ENCODE measurements at regions of chr17 and their contacts with region 1.

Region 1: GRCh38 chr17:50853015-50853615 is 13.0 kb downstream of the TOB1 start:
- DNase-seq: no peak
- ATAC-seq: no peak
- H3K4me3 ChIP-seq: no peak overlapping the region
- H3K27ac ChIP-seq: no peak overlapping the region; the same call in 1 of the 2 replicates
- H3K4me1 ChIP-seq: peaks cover 11% of the 10 kb centered on the region; the same call in 1 of the 2 replicates
- H3K27me3 ChIP-seq: no peaks in the 10 kb centered on the region
- CTCF ChIP-seq: no peak

Region 2: GRCh38 chr17:50949989-50950881 is 97.1 kb after region 1 on chr17:
- CTCF ChIA-PET with region 1: interaction called, 33 read pairs
- POLR2A ChIA-PET with region 1: interaction called, 4 read pairs
- in situ Hi-C with region 1: no loop called
- intact Hi-C with region 1: loop called (anchors 1 kb)
- DNase-seq: peak; percentile 67
- ATAC-seq: peak; percentile 86
- H3K4me3 ChIP-seq: peak overlapping the region in 1 of 2 experiments; percentile 15; a peak in 1 of 4 replicates
- H3K27ac ChIP-seq: peak overlapping the region; percentile 87
- H3K4me1 ChIP-seq: peaks cover 63% of the 10 kb centered on the region
- H3K27me3 ChIP-seq: no peaks in the 10 kb centered on the region
- CTCF ChIP-seq: peak; percentile 96

Region 3: DNA sequence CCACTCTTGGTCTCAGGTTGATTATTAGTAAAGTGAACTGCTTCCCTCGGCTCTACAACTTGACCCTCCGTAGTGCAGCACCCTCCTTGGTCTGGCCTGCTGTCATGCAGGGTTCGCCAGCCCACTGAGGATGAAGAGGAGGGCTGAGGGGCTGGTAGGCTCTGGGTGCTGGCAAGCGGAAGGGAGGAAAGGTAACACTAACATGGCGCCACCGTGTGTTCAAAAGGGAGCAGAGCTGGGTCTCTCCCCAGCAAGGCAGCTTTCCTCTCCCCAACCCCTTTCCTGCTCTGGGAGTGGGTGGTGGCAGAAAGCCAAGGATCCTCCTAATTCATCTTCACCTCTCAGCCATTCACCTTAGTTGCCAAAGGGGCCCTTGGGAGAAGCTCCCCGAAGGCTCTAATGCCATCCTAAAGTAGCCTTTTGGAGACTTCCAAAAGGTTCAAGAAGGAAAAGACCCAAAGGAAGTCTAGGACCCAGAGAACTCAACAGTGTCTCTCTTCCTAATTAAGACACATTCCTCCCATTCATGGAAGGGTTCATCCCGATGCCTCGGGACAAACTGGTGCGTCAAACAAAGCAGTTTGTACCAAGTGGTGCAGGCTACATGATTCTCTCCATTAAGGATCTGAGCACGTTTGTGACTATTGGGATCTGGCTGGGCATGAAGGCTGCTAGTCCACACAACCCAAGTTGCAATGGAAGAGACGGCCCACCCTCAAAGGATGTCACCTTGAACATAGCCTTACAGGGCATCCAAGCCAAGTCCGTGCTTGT is 103.8 kb after region 1 on chr17:
- CTCF ChIA-PET with region 1: interaction called, 11 read pairs
- POLR2A ChIA-PET with region 1: interaction called, 4 read pairs
- in situ Hi-C with region 1: no loop called
- intact Hi-C with region 1: no loop called
- DNase-seq: peak; percentile 27
- ATAC-seq: peak; percentile 67
- H3K4me3 ChIP-seq: no peak overlapping the region
- H3K27ac ChIP-seq: no peak overlapping the region
- H3K4me1 ChIP-seq: peaks cover 15% of the 10 kb centered on the region
- H3K27me3 ChIP-seq: no peaks in the 10 kb centered on the region
- CTCF ChIP-seq: peak; percentile 86